Activated CD4-positive, alpha-beta memory T cell treated with anti-CD3 and anti-CD28 coated beads for 36 hours (primary cell): ENCODE measurements at regions of chr18 and their contacts with region 1.

Region 1: GRCh38 chr18:5890331-5891183 is 4.8 kb downstream of the TMEM200C start:
- DNase-seq: peak; percentile 40
- H3K4me3 Mint-ChIP-seq: no peak overlapping the region
- H3K27ac Mint-ChIP-seq: no peak overlapping the region
- H3K4me1 Mint-ChIP-seq: peaks cover 9% of the 10 kb centered on the region
- H3K27me3 Mint-ChIP-seq: peaks cover 54% of the 10 kb centered on the region

Region 2: DNA sequence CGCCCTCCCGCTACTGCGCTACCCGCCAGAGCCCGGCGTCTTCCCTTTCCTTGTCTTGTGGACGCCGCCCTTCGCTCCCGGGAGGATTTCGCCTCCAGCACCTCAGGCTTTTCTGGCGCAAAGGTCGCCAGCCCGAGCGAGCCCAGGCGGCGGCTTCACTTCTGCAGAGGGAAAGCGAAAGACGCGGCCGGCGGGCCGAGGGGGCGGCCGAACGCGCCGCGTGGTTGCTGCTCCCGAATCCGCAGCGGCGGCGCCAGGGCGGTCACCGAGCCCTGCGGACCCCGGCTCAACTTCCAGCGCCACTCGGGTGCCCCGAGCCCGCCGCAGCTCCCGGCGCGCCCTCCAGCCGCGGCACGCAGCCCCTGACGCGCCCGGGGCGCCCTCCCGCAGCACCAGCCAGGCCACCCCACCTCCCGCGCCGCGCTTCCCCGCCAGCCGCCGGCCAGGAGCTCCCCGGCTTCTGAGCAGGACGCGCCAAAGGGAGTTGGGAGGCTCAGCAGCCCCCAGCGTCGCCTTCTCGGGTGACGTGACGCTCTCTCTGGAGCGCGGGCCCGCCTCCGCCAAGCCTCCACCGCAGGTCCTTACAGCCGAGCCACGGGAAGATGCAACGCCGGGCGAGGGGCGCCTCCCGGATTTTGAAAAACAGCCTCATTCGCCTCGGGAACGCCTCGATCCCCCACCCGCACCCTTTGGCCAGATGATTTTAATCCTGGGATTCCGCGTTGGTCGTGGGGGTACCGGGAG is 261.9 kb before region 1 on chr18:
- CTCF ChIA-PET with region 1: no interaction called
- POLR2A ChIA-PET with region 1: no interaction called
- intact Hi-C with region 1: loop called (anchors 10 kb)
- DNase-seq: peak; percentile 13
- H3K4me3 Mint-ChIP-seq: peak overlapping the region; percentile 34
- H3K27ac Mint-ChIP-seq: no peak overlapping the region
- H3K4me1 Mint-ChIP-seq: peaks cover 3% of the 10 kb centered on the region
- H3K27me3 Mint-ChIP-seq: peaks cover 30% of the 10 kb centered on the region

Region 3: DNA sequence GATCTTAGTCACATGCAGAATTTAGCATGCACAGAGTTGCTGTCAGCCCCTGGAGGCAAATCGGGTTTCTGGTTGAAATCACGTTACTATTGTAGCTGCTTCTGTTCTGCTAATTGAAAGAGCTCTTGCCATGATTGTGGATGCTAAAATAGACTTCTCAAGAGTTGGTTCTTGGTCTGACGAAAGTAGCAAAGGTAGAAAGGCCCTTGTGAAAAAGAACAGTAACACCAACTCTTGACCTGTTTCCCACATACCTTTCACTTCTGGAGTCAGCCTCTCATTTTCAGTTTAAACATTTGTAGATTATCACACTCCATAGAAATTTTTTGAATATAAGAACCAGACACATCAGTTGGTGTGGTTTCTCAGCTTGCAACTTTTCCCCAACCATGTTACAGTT is 236.8 kb before region 1 on chr18:
- CTCF ChIA-PET with region 1: no interaction called
- POLR2A ChIA-PET with region 1: no interaction called
- intact Hi-C with region 1: no loop called
- DNase-seq: no peak
- H3K4me3 Mint-ChIP-seq: no peak overlapping the region
- H3K27ac Mint-ChIP-seq: no peak overlapping the region
- H3K4me1 Mint-ChIP-seq: no peaks in the 10 kb centered on the region
- H3K27me3 Mint-ChIP-seq: no peaks in the 10 kb centered on the region

Region 4: DNA sequence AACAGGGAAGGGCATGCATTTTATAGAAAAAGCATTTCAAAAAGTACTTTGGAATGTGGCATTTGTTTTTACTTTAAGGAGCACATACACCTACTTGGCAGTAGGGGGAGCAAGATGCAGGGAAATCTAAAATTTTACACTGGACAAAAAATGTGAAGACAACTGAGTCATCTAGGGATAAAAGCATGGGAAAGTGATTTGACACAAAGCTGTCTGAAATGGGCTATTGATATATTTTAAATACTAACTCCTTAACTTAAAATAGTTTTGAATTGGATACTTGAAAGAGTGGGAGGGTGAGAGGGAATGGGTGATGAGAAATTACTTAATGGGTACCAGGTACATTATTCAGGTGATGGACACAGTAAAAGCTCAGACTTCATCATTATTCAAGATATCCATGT is 11.1 kb before region 1 on chr18:
- CTCF ChIA-PET with region 1: interaction called, 21 read pairs
- POLR2A ChIA-PET with region 1: no interaction called
- intact Hi-C with region 1: no loop called
- DNase-seq: no peak
- H3K4me3 Mint-ChIP-seq: no peak overlapping the region
- H3K27ac Mint-ChIP-seq: no peak overlapping the region
- H3K4me1 Mint-ChIP-seq: no peaks in the 10 kb centered on the region
- H3K27me3 Mint-ChIP-seq: peaks cover 2% of the 10 kb centered on the region